GM10248 (cell line): ENCODE measurements at regions of chr1 and their contacts with region 1.

Region 1: GRCh38 chr1:31593770-31594632 is 17.7 kb downstream of the TINAGL1 start:
- DNase-seq: peak; percentile 77
- CTCF ChIP-seq: peak; percentile 90

Region 2: DNA sequence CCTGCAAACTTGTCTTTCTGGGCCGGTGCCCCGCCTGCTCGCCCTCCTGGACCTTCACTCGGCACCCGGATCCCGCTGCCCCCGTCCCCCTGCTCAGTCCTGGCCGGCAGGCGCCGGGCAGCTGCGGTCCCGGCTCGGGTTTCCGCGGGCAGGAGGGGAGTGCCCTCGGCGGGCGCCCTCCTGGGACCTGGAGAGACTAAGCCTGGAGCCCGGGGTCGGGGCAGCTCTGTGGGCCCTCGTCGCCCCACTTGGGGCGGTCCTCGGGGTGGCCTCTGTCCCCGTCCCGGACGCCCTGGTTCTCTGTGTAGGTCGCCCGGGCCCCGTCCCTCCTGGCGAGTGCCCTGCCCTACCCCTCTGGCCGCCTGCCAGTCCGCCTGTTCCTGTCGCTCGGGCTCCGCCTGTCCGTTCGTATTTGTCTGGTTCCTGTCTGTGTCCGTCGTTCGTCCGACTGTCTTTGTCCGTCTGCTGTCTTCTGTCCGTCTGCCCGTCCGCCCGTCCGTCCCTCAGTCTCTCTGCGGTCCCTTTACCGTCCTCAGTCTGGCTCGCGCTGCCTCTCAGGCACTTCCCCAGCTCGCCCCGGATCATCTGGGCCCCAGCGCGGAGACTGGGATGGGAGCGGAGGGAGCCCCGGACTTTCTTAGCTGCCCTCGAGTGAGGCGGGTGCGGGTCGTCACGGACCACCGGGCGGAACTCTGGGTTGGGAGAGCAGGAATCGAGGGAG is 180.4 kb before region 1 on chr1:
- CTCF ChIA-PET with region 1: no interaction called
- POLR2A ChIA-PET with region 1: no interaction called
- DNase-seq: no peak
- CTCF ChIP-seq: no peak

Region 3: DNA sequence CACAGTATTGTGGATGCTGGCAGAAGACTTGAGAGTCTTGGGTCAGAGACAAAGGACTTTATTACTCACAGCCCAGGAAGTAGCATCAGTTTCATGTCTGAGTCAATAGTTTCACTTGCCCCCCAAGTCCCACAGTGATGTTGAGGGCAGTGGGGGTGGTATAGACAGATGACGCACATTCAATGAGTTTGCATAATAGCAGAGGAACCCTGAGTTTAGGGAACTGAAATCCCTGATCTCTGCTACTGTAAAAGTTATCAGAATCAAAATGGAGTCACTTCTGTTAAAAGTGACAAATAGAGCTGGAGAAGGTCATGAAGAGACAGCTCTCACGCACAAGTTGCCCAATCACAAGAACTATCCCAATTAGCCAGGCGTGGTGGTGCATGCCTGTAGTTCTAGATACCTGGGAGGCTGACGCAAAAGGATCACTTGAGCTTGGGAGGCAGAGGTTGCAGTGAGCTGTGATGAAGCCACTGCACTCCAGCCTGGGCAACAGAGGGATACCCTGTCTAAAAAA is 12.0 kb after region 1 on chr1:
- CTCF ChIA-PET with region 1: interaction called, 38 read pairs
- POLR2A ChIA-PET with region 1: no interaction called
- DNase-seq: peak; percentile 87
- CTCF ChIP-seq: no peak

Region 4: GRCh38 chr1:31644560-31645273 is 50.7 kb after region 1 on chr1 and contains the start of gene PEF1:
- CTCF ChIA-PET with region 1: no interaction called
- POLR2A ChIA-PET with region 1: no interaction called
- DNase-seq: peak; percentile 100
- CTCF ChIP-seq: no peak